Endothelial cell of umbilical vein (primary cell): ENCODE measurements at regions of chr7 and their contacts with region 1.

Region 1: GRCh38 chr7:111029574-111030251 is 61.2 kb upstream of the LRRN3 start:
- DNase-seq: peak; percentile 71
- H3K4me3 ChIP-seq: peak overlapping the region in 1 of 3 experiments; percentile 36
- H3K27ac ChIP-seq: peak overlapping the region; percentile 86
- H3K4me1 ChIP-seq: peaks cover 21% of the 10 kb centered on the region
- H3K27me3 ChIP-seq: no peaks in the 10 kb centered on the region
- CTCF ChIP-seq: no peak
- POLR2A ChIP-seq: no peak

Region 2: GRCh38 chr7:110924281-110924680 is 105.4 kb before region 1 on chr7:
- CTCF ChIA-PET with region 1: no interaction called
- POLR2A ChIA-PET with region 1: no interaction called
- dilution Hi-C with region 1: no loop called
- intact Hi-C with region 1: loop called (anchors 2 kb)
- DNase-seq: no peak
- H3K4me3 ChIP-seq: no peak overlapping the region
- H3K27ac ChIP-seq: no peak overlapping the region
- H3K4me1 ChIP-seq: peaks cover 15% of the 10 kb centered on the region
- H3K27me3 ChIP-seq: no peaks in the 10 kb centered on the region
- CTCF ChIP-seq: no peak
- POLR2A ChIP-seq: no peak

Region 3: GRCh38 chr7:111089822-111090426 is 60.2 kb after region 1 on chr7:
- CTCF ChIA-PET with region 1: no interaction called
- POLR2A ChIA-PET with region 1: no interaction called
- dilution Hi-C with region 1: no loop called
- intact Hi-C with region 1: loop called (anchors 2 kb)
- DNase-seq: peak; percentile 54
- H3K4me3 ChIP-seq: no peak overlapping the region
- H3K27ac ChIP-seq: no peak overlapping the region
- H3K4me1 ChIP-seq: peaks cover 3% of the 10 kb centered on the region
- H3K27me3 ChIP-seq: no peaks in the 10 kb centered on the region
- CTCF ChIP-seq: peak; percentile 44 to 52
- POLR2A ChIP-seq: no peak

Region 4: DNA sequence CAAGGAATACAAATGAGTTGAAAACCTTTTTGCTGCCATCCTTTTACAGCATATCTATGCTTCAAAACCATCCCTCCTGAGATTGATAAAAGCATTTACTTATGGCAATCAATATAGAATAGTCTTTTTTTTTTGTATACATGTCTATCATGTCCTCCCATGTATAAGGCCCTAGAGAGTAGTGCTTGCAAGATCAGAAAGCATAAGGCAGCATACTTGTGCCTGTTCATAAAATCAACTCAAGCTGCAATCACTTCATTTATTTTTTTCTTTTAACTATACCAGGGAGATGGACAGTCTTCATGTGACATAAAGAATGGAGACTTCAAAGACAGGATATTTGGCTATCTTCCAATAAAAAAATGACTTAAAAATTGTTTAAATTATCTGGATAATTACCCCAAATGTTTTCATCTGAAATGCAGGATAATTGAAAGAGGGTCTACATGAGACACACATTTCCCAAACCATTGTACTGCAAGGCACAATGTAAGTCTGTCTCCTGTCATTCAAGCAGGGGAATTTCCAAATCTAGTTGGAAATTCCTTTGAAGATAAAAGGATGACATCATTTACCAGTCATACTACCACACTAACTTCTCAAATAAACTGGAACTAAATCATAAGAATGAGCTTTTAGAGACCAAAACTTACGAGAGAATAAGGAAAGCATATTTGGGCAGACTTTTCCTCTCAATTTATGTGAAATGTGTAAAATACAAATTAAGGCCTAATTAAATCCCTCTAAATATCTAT is 83.7 kb after region 1 on chr7:
- CTCF ChIA-PET with region 1: no interaction called
- POLR2A ChIA-PET with region 1: no interaction called
- dilution Hi-C with region 1: no loop called
- intact Hi-C with region 1: no loop called
- DNase-seq: peak; percentile 54
- H3K4me3 ChIP-seq: no peak overlapping the region
- H3K27ac ChIP-seq: no peak overlapping the region
- H3K4me1 ChIP-seq: peaks cover 8% of the 10 kb centered on the region
- H3K27me3 ChIP-seq: no peaks in the 10 kb centered on the region
- CTCF ChIP-seq: no peak
- POLR2A ChIP-seq: no peak

Region 5: GRCh38 chr7:111352319-111352718 is 322.6 kb after region 1 on chr7:
- CTCF ChIA-PET with region 1: no interaction called
- POLR2A ChIA-PET with region 1: no interaction called
- dilution Hi-C with region 1: no loop called
- intact Hi-C with region 1: no loop called
- DNase-seq: no peak
- H3K4me3 ChIP-seq: no peak overlapping the region
- H3K27ac ChIP-seq: no peak overlapping the region
- H3K4me1 ChIP-seq: no peaks in the 10 kb centered on the region
- H3K27me3 ChIP-seq: no peaks in the 10 kb centered on the region
- CTCF ChIP-seq: no peak
- POLR2A ChIP-seq: no peak